Endothelial cell of umbilical vein (primary cell): ENCODE measurements at regions of chr4 and their contacts with region 1.

Region 1: GRCh38 chr4:98150092-98150761 is 7.0 kb upstream of the STPG2 start:
- DNase-seq: no peak
- H3K4me3 ChIP-seq: no peak overlapping the region
- H3K27ac ChIP-seq: no peak overlapping the region
- H3K4me1 ChIP-seq: peaks cover 6% of the 10 kb centered on the region
- H3K27me3 ChIP-seq: peaks cover 0 to 3% of the 10 kb centered on the region in 2 experiments
- CTCF ChIP-seq: no peak
- POLR2A ChIP-seq: no peak

Region 2: GRCh38 chr4:98203332-98204235 is 53.4 kb after region 1 on chr4:
- CTCF ChIA-PET with region 1: no interaction called
- POLR2A ChIA-PET with region 1: no interaction called
- dilution Hi-C with region 1: no loop called
- intact Hi-C with region 1: no loop called
- DNase-seq: no peak
- H3K4me3 ChIP-seq: no peak overlapping the region
- H3K27ac ChIP-seq: no peak overlapping the region
- H3K4me1 ChIP-seq: no peaks in the 10 kb centered on the region
- H3K27me3 ChIP-seq: peaks cover 0 to 3% of the 10 kb centered on the region in 2 experiments
- CTCF ChIP-seq: no peak
- POLR2A ChIP-seq: no peak

Region 3: GRCh38 chr4:98851806-98852205 is 701.6 kb after region 1 on chr4:
- CTCF ChIA-PET with region 1: no interaction called
- POLR2A ChIA-PET with region 1: no interaction called
- dilution Hi-C with region 1: no loop called
- intact Hi-C with region 1: loop called (anchors 10 kb)
- DNase-seq: no peak
- H3K4me3 ChIP-seq: no peak overlapping the region
- H3K27ac ChIP-seq: no peak overlapping the region
- H3K4me1 ChIP-seq: no peaks in the 10 kb centered on the region
- H3K27me3 ChIP-seq: no peaks in the 10 kb centered on the region
- CTCF ChIP-seq: no peak
- POLR2A ChIP-seq: no peak

Region 4: DNA sequence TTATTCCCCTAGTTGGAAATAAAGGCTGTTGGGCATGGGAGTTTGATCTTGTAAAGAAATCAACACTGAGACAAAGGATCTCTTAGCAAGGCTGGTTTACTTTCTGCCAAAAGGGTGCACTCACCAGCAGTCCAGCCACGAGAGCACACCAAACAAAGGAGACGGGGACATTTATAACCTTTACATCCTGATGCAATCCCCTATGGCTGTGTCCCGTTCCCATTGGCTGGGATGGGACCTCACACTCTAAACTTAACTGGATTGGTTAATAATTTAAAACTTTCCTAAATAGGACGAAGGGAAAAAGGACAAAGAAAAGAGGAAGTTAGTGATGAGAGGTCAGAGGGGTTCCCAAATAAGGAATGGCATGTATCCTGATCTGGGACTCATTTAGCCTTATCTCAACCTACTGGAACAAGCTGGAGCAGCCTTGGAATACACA is 863.2 kb after region 1 on chr4:
- CTCF ChIA-PET with region 1: no interaction called
- POLR2A ChIA-PET with region 1: no interaction called
- dilution Hi-C with region 1: no loop called
- intact Hi-C with region 1: no loop called
- DNase-seq: no peak
- H3K4me3 ChIP-seq: no peak overlapping the region
- H3K27ac ChIP-seq: no peak overlapping the region
- H3K4me1 ChIP-seq: no peaks in the 10 kb centered on the region
- H3K27me3 ChIP-seq: no peaks in the 10 kb centered on the region
- CTCF ChIP-seq: no peak
- POLR2A ChIP-seq: no peak

Region 5: DNA sequence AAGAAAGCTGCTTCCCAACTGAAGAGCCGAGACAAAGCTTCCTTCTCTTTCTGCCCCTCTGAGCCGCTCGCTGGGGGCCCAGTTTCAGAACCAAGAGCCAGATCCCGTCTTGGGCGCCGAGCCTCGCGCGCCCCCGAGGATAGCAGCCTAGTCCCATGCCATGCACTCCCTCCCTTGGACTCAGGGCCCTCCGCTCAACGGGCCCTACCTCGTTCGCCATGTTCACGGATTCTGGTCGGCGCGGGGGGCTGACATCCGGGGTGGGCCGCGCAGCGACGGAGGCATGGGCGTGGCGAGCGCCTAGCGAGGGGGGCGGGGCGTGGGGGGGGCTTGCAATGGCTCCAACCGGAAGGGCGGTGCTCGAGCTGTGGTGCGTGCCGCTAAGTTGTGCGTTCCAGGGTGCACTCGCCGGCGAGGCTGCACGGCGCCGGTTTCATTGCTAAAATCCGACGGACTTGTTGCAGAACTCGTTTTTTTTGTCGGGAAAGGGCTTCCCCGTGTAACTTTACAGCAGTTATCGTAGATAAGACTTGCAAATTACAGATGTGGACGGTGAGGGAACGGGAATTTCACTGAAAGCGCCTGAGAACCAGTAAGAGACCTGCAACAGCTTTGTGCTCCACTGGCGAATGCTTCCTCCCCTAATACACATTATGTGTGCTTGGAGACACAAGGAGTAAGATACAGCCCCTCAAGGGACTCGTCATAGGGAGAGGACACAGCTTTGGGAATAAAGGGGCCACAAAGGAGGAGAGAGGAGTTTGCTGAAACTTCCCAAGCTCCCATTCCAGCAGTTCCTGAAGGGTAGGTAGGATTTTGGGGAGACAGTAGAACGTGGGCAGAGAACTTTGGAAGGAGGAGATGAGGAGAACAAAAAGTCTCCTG is 938.5 kb after region 1 on chr4 and contains the start of gene ADH5:
- CTCF ChIA-PET with region 1: no interaction called
- POLR2A ChIA-PET with region 1: no interaction called
- dilution Hi-C with region 1: no loop called
- intact Hi-C with region 1: loop called (anchors 1 kb)
- DNase-seq: peak; percentile 72
- H3K4me3 ChIP-seq: peak within 1 kb of the TSS; percentile 80 to 98 (median 82)
- H3K27ac ChIP-seq: peak within 1 kb of the TSS; percentile 66
- H3K4me1 ChIP-seq: peaks cover 8% of the 10 kb centered on the region
- H3K27me3 ChIP-seq: no peaks in the 10 kb centered on the region
- CTCF ChIP-seq: no peak
- POLR2A ChIP-seq: peak; percentile 91
- total RNA-seq, gene ADH5: 101 and 103 TPM in 2 replicates